ENCODE measurements at regions of chr11 and their contacts with region 1.

Region 1: DNA sequence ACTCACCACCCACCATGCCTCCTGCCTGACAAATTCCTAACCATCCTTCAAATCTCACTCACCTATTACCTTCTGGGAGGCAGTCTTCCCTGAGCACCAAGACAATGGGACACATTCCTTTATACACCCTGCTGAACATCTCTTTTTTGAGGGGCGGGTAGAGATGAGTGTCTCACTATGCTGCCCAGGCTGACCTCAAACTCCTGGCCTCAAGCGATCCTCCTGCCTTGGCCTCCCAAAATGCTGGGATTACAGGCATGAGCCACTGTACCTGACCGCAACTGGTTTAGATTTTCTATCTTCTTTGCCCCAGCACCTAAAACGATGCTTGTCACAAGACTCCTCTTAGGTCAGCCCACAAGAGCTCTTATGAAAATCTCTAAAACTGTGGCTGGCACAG is 7.1 kb downstream of the TIMM10 start:
- DNase-seq: no peak
- ATAC-seq: no peak
- H3K4me3 ChIP-seq: no peak overlapping the region
- H3K4me3 Mint-ChIP-seq: no peak overlapping the region
- H3K27ac ChIP-seq: no peak overlapping the region
- H3K27ac Mint-ChIP-seq: no peak overlapping the region
- H3K4me1 ChIP-seq: no peaks in the 10 kb centered on the region
- H3K4me1 Mint-ChIP-seq: no peaks in the 10 kb centered on the region
- H3K27me3 ChIP-seq: no peaks in the 10 kb centered on the region
- H3K27me3 Mint-ChIP-seq: no peaks in the 10 kb centered on the region
- CTCF ChIP-seq: no peak

Region 2: GRCh38 chr11:57480409-57481137 is 42.8 kb before region 1 on chr11:
- CTCF ChIA-PET with region 1: interaction called, 38 read pairs
- POLR2A ChIA-PET with region 1: no interaction called
- intact Hi-C with region 1: loop called (anchors 2 kb)
- DNase-seq: peak; percentile 52
- ATAC-seq: peak; percentile 22
- H3K4me3 ChIP-seq: no peak overlapping the region
- H3K4me3 Mint-ChIP-seq: peak overlapping the region; percentile 61
- H3K27ac ChIP-seq: no peak overlapping the region
- H3K27ac Mint-ChIP-seq: no peak overlapping the region
- H3K4me1 ChIP-seq: peaks cover 46 to 53% of the 10 kb centered on the region in 2 donors
- H3K4me1 Mint-ChIP-seq: peaks cover 60% of the 10 kb centered on the region
- H3K27me3 ChIP-seq: peaks cover 0 to 22% (median 9%) of the 10 kb centered on the region in 4 experiments
- H3K27me3 Mint-ChIP-seq: peaks cover 5% of the 10 kb centered on the region
- CTCF ChIP-seq: peak; percentile 63

Measured in B cell (primary cell).